Stomach (tissue), 19 donors: ENCODE measurements at regions of chr4 and their contacts with region 1.

Region 1: GRCh38 chr4:154506253-154506652 is 14.7 kb upstream of the DCHS2 start:
- DNase-seq: peak in 1 of 2 donors; percentile 76
- H3K4me3 ChIP-seq: no peak overlapping the region
- H3K27ac ChIP-seq: no peak overlapping the region
- H3K4me1 ChIP-seq: no peaks in the 10 kb centered on the region
- H3K27me3 ChIP-seq: no peaks in the 10 kb centered on the region
- CTCF ChIP-seq: peak in 2 of 7 experiments; percentile 29 to 37
- EP300 ChIP-seq: no peak
- POLR2A ChIP-seq: no peak

Region 2: DNA sequence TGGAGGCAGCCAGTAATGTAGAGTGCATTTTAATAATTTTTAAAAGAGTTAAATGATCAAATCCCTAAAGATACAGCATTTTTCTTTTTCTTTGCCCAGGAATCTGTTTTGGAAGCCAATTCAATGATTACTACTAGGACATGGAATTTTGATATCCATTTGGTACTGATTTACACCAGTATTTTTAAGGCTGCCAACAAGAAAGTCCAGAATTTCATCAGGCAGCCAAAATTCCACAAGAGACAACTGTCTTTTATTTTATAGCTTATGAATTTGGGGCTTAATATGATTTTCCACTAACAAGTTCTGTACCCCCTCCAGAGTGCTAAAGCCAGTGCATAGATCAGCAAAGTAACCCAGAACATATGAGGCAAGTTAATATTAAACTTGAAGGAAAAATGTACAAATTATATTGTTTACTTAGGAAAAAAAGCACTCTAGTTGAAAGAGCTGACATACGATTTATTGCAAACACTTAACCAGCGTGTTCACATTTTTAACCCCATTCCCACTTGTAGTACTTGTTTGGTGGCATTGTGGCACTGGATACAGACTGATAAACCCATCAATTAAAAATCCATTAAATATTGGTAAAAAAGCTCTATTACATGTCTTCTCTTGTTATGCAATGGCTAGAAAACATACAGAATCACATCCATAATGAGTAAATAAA is 274.3 kb before region 1 on chr4:
- intact Hi-C with region 1: no loop called
- DNase-seq: peak in 1 of 2 donors; percentile 19
- H3K4me3 ChIP-seq: no peak overlapping the region
- H3K27ac ChIP-seq: no peak overlapping the region
- H3K4me1 ChIP-seq: no peaks in the 10 kb centered on the region
- H3K27me3 ChIP-seq: no peaks in the 10 kb centered on the region
- CTCF ChIP-seq: no peak
- EP300 ChIP-seq: no peak
- POLR2A ChIP-seq: no peak

Region 3: GRCh38 chr4:154277172-154277571 is 229.1 kb before region 1 on chr4:
- intact Hi-C with region 1: no loop called
- DNase-seq: no peak
- H3K4me3 ChIP-seq: no peak overlapping the region
- H3K27ac ChIP-seq: no peak overlapping the region
- H3K4me1 ChIP-seq: no peaks in the 10 kb centered on the region
- H3K27me3 ChIP-seq: no peaks in the 10 kb centered on the region
- CTCF ChIP-seq: no peak
- EP300 ChIP-seq: no peak
- POLR2A ChIP-seq: no peak

Region 4: DNA sequence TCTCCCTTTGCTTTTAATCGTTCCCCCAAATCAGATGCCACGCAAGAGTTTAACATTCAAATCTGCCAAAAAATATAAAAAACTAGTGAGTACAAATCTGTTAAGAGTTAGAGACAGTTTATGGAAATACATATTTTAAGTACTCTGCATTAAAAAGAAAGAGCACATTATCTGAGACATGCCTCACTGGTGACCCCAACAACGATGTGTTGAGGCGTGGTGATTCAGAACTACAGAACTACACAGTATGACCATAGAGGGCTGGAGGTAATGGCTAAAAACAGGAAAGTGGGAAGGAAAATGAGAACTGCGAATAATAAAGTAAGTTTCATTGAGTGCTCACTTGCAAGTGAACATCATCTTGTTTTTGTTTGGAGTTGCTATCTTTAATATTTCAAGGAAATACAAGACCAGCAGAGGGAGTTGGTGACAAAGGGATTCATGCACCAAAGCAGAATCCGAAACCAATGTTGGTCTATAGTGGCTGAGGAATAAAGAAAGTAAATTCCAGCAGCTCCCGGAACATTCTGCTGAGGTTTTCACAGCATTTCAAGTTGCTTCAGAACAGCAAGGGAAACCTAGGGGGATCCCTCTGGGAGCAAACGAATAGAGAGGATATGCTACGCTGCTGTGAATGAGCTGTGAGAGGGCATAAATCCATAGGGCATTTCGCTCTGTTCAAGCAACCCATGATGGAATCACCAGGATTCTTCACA is 106.8 kb before region 1 on chr4:
- intact Hi-C with region 1: loop called (anchors 5 kb)
- DNase-seq: peak in 1 of 2 donors; percentile 78
- H3K4me3 ChIP-seq: peak overlapping the region; percentile 10 to 33 (median 24)
- H3K27ac ChIP-seq: peak overlapping the region in 1 of 5 donors; percentile 47
- H3K4me1 ChIP-seq: no peaks in the 10 kb centered on the region
- H3K27me3 ChIP-seq: no peaks in the 10 kb centered on the region
- CTCF ChIP-seq: peak in 4 of 7 experiments; percentile 15 to 47 (median 34)
- EP300 ChIP-seq: no peak
- POLR2A ChIP-seq: no peak

Region 5: GRCh38 chr4:154836513-154836912 is 330.3 kb after region 1 on chr4:
- intact Hi-C with region 1: no loop called
- DNase-seq: no peak
- H3K4me3 ChIP-seq: no peak overlapping the region
- H3K27ac ChIP-seq: no peak overlapping the region
- H3K4me1 ChIP-seq: peaks cover 0 to 5% (median 4%) of the 10 kb centered on the region in 4 donors
- H3K27me3 ChIP-seq: no peaks in the 10 kb centered on the region
- CTCF ChIP-seq: no peak
- EP300 ChIP-seq: no peak
- POLR2A ChIP-seq: no peak